WTC11 (cell line): ENCODE measurements at regions of chr11 and their contacts with region 1.

Region 1: GRCh38 chr11:65588199-65589054 is 7.2 kb downstream of the KCNK7 start:
- DNase-seq: peak; percentile 80
- ATAC-seq: peak; percentile 49
- H3K4me3 Mint-ChIP-seq: no peak overlapping the region
- H3K27ac Mint-ChIP-seq: 0 out of 2 replicates have a peak overlapping the region, but pooled peaks have one; percentile 19
- H3K4me1 Mint-ChIP-seq: peaks cover 37% of the 10 kb centered on the region
- H3K27me3 Mint-ChIP-seq: peaks cover 77% of the 10 kb centered on the region
- CTCF ChIP-seq: peak; percentile 49

Region 2: DNA sequence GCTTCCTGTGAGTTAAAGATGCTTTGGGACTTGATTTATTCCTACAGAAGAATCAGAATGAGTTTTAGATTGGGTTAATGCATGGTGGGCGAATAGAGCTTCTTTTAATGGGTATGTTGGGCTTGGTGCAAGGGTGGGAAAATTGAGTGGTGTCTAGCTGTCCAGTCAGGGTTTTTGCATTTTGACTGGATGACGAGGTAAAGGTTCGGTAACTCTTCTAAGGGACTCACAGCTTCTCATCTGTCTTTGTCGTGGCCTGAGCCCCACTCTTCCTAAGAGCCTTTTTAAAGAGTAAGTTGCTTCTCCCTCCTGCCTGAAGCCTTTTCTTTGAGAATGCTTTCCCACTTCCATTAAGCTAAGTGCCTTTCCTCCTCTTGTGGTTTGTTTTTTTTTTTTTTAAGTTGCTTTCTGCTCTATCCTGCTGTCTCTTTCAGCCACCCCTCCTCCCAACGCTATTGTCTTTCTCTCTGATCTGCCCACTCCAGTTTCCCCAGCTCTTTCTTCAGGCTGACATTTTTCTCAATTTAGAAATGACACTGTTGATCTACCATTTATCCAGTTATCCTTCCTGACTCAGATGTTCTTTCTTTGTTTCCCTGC is 253.6 kb before region 1 on chr11:
- CTCF ChIA-PET with region 1: no interaction called
- POLR2A ChIA-PET with region 1: no interaction called
- DNase-seq: no peak
- ATAC-seq: no peak
- H3K4me3 Mint-ChIP-seq: peak overlapping the region; percentile 85
- H3K27ac Mint-ChIP-seq: peak overlapping the region; percentile 6
- H3K4me1 Mint-ChIP-seq: peaks cover 14% of the 10 kb centered on the region
- H3K27me3 Mint-ChIP-seq: peaks cover 3% of the 10 kb centered on the region
- CTCF ChIP-seq: no peak

Region 3: GRCh38 chr11:65551572-65552398 is 36.6 kb before region 1 on chr11:
- CTCF ChIA-PET with region 1: interaction called, 25 read pairs
- POLR2A ChIA-PET with region 1: interaction called, 3 read pairs
- DNase-seq: peak; percentile 89
- ATAC-seq: peak; percentile 64
- H3K4me3 Mint-ChIP-seq: peak overlapping the region; percentile 36; the same call in 1 of the 2 replicates
- H3K27ac Mint-ChIP-seq: no peak overlapping the region
- H3K4me1 Mint-ChIP-seq: peaks cover 42% of the 10 kb centered on the region
- H3K27me3 Mint-ChIP-seq: peaks cover 80% of the 10 kb centered on the region
- CTCF ChIP-seq: peak; percentile 49; the same call in 1 of the 2 replicates

Region 4: DNA sequence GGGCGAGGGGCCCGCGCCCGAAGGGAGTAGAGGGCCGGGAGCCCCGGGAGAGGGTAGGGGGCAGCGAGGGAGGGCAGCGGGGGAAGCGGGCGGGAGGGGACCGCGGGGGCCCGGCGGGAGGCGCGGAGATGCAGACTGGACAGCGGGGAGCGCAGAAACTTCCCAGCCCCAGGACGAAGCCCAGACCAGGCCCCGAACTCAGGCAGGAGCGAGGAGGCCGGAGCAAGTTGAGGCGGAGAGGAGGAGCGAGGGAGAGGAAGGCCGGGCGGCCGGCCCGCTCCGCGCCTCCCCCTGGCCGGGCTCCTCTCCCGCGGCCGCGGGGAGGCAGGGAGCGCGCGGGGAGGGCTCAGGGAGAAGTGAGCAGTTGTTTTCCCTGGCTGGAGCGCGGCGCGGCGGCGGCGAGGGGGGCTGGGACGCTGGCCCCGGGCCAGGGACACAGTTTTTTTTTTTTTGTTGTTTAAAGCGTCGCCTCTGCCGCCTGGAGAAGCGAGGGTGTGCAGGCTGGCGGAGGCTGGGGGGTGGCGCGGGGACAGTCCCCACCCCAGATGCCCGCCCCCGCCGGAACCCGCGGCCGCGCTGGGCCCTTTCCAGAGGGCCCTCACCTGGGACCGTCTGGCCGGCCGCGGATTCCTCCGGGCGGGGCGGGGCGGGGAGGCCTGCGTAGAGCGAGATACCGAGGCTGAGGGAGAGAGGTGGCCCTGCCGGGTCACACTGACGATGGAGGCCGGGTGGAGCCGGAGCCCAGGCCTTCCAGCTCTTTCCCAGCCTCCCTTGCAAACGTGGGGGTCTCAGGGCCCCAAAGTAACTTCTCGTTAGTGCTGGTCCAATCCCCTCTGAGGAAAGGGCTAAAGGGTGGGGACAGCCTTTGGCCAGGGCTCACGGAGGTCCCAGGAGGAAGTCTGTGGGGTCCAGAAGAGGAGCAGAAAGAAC is 30.2 kb before region 1 on chr11 and contains the start of gene LTBP3:
- CTCF ChIA-PET with region 1: interaction called, 67 read pairs
- POLR2A ChIA-PET with region 1: interaction called, 3 read pairs
- DNase-seq: peak; percentile 60
- ATAC-seq: peak; percentile 32
- H3K4me3 Mint-ChIP-seq: peak within 1 kb of the TSS; percentile 69
- H3K27ac Mint-ChIP-seq: peak within 1 kb of the TSS; percentile 33; the same call in 1 of the 2 replicates
- H3K4me1 Mint-ChIP-seq: peaks cover 50% of the 10 kb centered on the region
- H3K27me3 Mint-ChIP-seq: peaks cover 62% of the 10 kb centered on the region
- CTCF ChIP-seq: no peak
- total RNA-seq, gene LTBP3: 15.9 to 23.6 TPM (median 20.7 TPM) in 3 replicates

Region 5: DNA sequence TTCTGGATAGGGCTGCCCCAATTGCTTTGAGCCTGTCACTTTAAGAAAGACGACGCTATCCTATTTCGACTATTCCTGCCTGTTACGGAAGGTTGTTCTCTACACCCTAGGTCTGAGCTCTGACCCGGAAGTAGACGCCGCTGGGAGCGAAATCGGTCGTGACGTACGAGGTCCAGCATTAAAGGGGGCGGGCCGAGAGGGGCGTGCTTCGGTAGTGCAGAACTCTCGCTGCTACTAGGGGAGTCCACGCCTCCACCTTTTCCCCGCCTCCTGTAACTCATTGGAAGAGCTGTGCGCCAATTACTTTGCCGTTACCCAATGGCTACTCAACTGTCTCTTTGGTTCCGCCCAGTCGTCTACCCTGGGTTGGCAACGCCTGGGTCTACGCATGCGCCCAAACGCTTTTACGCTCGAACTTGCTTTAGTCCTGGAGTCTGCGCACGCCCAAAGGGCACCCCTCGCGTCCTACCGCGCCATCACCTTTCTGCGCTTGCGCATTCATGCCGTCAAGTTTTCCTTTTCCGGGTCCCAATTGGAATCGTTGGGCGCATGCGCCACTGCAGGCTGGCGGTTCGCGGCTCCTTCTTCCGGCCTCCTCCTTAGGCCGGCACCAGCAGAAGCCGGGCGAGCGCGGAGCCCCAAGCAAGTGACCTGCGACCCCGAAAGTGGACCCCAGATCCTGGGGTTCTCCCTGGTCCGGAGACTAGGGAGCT is 27.0 kb after region 1 on chr11 and contains the start of gene PCNX3:
- CTCF ChIA-PET with region 1: interaction called, 311 read pairs
- POLR2A ChIA-PET with region 1: interaction called, 7 read pairs
- DNase-seq: peak; percentile 100
- ATAC-seq: peak; percentile 91
- H3K4me3 Mint-ChIP-seq: peak within 1 kb of the TSS; percentile 94
- H3K27ac Mint-ChIP-seq: peak within 1 kb of the TSS; percentile 98
- H3K4me1 Mint-ChIP-seq: peaks cover 21% of the 10 kb centered on the region
- H3K27me3 Mint-ChIP-seq: no peaks in the 10 kb centered on the region; the same call in 1 of the 2 replicates
- CTCF ChIP-seq: no peak
- total RNA-seq, gene PCNX3: 44.6 to 51.6 TPM (median 45.8 TPM) in 3 replicates

Region 6: DNA sequence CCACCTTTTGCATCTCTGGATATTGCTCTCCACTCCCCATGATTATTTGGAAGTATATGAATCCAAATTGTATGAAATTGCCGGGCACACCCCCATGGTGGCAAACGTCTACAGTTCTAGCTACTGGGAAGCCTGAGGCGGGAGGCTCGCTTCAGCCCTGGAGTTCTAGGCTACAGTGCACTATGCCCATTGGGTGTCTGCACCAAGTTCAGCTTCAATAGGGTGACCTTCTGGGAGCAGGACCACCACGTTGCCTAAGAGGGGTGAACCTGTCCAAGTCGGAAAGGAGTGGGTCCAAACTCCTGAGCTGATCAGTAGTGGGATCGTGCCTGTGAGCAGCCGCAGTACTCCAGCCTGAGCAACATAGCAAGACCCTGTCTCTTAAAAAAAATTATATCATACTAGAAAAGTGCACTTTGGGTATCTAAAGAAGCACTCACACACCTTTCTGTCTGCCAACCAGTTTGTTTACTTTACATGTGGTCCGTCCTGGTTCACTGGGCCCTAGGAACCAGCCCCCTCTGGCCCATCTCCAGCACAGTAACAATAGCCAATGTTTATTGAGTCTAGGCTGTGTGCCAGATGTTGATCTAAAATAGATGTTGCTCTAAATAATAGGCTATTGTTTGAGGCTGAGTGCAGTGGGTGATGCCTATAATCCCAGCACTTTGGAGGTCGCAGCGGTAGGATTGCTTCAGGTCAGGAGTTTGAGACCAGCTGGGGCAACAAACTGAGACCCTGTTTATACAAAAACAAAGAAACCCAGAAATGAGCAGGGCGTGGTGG is 107.2 kb after region 1 on chr11:
- CTCF ChIA-PET with region 1: no interaction called
- POLR2A ChIA-PET with region 1: no interaction called
- DNase-seq: no peak
- ATAC-seq: no peak
- H3K4me3 Mint-ChIP-seq: no peak overlapping the region
- H3K27ac Mint-ChIP-seq: no peak overlapping the region
- H3K4me1 Mint-ChIP-seq: peaks cover 3% of the 10 kb centered on the region; the same call in 1 of the 2 replicates
- H3K27me3 Mint-ChIP-seq: peaks cover 12% of the 10 kb centered on the region
- CTCF ChIP-seq: no peak